ENCODE measurements at regions of chr17 and their contacts with region 1.

Region 1: DNA sequence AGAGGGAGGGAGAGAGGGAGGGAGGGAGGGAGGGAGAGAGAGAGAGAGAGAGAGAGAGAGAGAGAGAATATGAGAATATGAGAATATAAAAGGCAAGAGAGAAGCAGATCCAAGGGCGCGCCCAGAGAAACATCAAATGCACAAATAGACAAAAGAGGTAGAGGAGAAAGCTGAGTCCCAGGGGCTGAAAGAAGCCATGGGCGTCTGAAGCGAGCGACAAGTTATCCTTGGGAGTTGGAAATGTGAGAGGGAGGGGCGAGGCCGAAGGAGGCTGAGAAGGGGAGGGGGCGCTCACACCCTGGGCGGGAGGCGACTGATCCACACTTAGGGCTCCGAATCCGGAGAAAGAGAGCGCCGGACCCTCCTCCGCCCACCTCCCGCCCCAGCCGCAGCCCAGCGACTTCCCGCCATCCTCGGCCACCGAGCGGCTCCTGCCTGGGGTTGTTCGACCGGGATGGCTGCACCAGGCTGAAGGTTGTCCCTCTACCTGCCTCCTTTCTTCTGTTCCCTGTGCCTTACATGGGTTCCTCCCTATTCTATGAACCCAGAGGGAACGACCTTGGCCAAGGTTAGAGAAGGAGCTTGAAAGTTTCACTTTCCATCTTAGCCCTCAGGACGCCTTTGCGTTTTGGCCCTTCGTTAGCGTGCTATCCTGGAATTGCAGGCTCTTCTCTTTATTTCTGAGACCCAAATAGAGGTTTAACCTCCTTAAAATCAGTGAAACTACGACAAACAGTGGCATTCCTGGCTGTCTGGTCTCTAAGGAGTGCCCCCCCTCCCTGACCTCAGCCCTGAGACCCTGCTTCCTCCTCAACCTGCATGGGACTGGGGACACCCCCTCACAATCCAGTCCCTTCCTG is 21.2 kb upstream of the HOXB9 start:
- DNase-seq: peak in 1 of 35 experiments; percentile 33
- ATAC-seq: peak; percentile 12 to 28 (median 25)
- H3K4me3 ChIP-seq: peak overlapping the region; percentile 56
- H3K4me3 Mint-ChIP-seq: peak overlapping the region; percentile 80 to 83 (median 83)
- H3K27ac ChIP-seq: no peak overlapping the region
- H3K27ac Mint-ChIP-seq: no peak overlapping the region
- H3K4me1 ChIP-seq: peaks cover 7 to 31% of the 10 kb centered on the region in 2 experiments
- H3K4me1 Mint-ChIP-seq: peaks cover 16 to 31% (median 27%) of the 10 kb centered on the region in 3 donors
- H3K27me3 ChIP-seq: peaks cover 27 to 58% of the 10 kb centered on the region in 2 experiments
- H3K27me3 Mint-ChIP-seq: peaks cover 56% of the 10 kb centered on the region in 2 donors

Region 2: GRCh38 chr17:48593840-48594537 is 53.3 kb before region 1 on chr17:
- CTCF ChIA-PET with region 1: no interaction called
- POLR2A ChIA-PET with region 1: no interaction called
- DNase-seq: peak; percentile 52 to 90 (median 75)
- ATAC-seq: peak; percentile 58 to 73 (median 64)
- H3K4me3 ChIP-seq: peak overlapping the region; percentile 15 to 43
- H3K4me3 Mint-ChIP-seq: peak overlapping the region; percentile 70 to 82 (median 76)
- H3K27ac ChIP-seq: no peak overlapping the region
- H3K27ac Mint-ChIP-seq: no peak overlapping the region
- H3K4me1 ChIP-seq: peaks cover 8 to 54% of the 10 kb centered on the region in 2 experiments
- H3K4me1 Mint-ChIP-seq: peaks cover 47 to 53% (median 48%) of the 10 kb centered on the region in 3 donors
- H3K27me3 ChIP-seq: peaks cover 3 to 92% of the 10 kb centered on the region in 2 experiments
- H3K27me3 Mint-ChIP-seq: peaks cover 87 to 88% of the 10 kb centered on the region in 2 donors

Region 3: DNA sequence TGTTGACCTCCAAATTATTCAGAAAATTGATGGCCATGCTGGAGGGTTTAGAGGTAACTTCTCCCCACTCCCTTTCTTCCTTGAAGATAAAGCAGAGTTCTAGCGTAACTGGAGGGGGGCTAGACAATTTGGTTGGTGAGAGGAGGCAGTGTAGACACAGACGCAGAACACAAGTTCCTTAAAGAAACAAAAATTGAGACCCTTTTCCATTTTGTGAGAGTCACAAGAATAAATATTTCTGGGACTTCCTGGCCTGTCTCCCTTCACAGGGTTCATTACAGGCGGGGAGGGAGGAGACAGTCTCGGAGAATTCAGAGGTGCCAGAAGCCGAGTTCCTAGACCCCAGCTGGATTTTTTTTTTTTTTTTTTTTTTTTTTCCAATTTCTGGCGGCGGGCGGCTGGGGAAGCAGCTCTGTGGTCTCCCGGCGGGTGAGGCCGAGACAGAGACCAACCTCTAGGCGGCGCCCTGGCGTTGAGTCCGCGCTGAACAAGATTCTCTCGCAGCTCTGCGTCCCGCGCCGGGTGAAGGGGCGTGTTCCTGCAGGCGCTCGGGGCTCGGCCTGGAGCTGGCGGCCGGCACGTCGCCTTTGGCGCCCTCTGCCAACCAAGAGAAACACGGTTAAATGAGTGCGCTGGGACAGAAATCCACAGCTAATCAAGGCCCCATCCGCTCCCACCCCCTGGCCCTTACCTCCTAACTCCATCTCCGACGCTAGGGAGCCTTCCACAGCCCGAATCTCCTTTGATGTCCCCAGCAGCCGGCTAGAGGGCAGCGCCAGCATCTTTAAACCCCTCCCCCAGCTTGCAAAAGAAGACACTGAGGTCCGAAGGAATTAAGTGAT is 10.9 kb before region 1 on chr17:
- CTCF ChIA-PET with region 1: interaction called, 4 to 10 read pairs
- POLR2A ChIA-PET with region 1: no interaction called
- DNase-seq: peak in 31 of 35 experiments; percentile 28 to 79 (median 60)
- ATAC-seq: peak; percentile 66 to 85 (median 80)
- H3K4me3 ChIP-seq: no peak overlapping the region
- H3K4me3 Mint-ChIP-seq: peak overlapping the region in 1 of 3 donors; percentile 49
- H3K27ac ChIP-seq: no peak overlapping the region
- H3K27ac Mint-ChIP-seq: no peak overlapping the region
- H3K4me1 ChIP-seq: peaks cover 0 to 20% of the 10 kb centered on the region in 2 experiments
- H3K4me1 Mint-ChIP-seq: peaks cover 13 to 20% (median 19%) of the 10 kb centered on the region in 3 donors
- H3K27me3 ChIP-seq: peaks cover 26 to 83% of the 10 kb centered on the region in 2 experiments
- H3K27me3 Mint-ChIP-seq: peaks cover 67 to 96% of the 10 kb centered on the region in 2 donors